MCF 10A (cell line): ENCODE measurements at regions of chr10 and their contacts with region 1.

Region 1: GRCh38 chr10:63236113-63236935 is 103.2 kb downstream of the NRBF2 start:
- DNase-seq: peak; percentile 85
- H3K4me3 Mint-ChIP-seq: peak overlapping the region; percentile 19
- H3K27ac Mint-ChIP-seq: peak overlapping the region; percentile 64
- H3K4me1 Mint-ChIP-seq: peaks cover 24% of the 10 kb centered on the region
- H3K27me3 Mint-ChIP-seq: no peaks in the 10 kb centered on the region
- CTCF ChIP-seq: no peak

Region 2: DNA sequence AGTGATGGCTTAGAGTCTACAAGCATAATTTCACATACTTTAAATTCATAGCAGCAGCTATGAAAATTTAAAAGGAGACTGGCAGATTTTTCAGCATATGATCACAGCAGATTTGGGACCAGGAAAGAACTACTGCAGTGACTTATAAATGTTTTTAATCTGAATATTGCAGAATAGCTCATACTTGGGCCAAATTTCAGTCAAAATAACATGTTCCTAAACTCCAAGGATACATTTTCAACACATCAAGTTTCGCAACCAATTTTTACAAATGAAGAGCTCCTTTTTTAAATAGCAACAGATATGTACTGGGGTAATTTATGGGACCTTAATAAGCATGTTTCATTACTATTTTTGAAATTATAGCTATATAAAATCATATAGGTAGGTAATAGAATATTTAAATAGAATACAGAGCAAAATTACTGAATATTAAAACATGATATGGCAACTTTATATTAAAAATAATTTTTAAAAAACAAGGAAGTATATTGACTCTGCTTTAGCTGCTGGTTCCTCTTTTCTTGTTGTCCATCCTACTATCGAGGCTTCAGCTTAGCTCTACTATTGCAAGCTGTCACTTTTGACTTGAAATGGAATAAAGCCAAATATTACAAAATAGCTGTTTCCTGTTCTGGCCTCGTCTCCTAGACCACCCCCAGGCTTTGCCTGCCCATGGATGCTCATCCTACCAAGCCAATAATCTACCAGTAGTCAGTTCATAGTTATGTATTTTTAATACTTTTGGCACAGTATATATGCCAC is 19.9 kb after region 1 on chr10:
- CTCF ChIA-PET with region 1: interaction called, 4 read pairs
- POLR2A ChIA-PET with region 1: interaction called, 30 read pairs
- intact Hi-C with region 1: no loop called
- DNase-seq: peak; percentile 35
- H3K4me3 Mint-ChIP-seq: no peak overlapping the region
- H3K27ac Mint-ChIP-seq: peak overlapping the region; percentile 6
- H3K4me1 Mint-ChIP-seq: peaks cover 39% of the 10 kb centered on the region
- H3K27me3 Mint-ChIP-seq: no peaks in the 10 kb centered on the region
- CTCF ChIP-seq: no peak

Region 3: DNA sequence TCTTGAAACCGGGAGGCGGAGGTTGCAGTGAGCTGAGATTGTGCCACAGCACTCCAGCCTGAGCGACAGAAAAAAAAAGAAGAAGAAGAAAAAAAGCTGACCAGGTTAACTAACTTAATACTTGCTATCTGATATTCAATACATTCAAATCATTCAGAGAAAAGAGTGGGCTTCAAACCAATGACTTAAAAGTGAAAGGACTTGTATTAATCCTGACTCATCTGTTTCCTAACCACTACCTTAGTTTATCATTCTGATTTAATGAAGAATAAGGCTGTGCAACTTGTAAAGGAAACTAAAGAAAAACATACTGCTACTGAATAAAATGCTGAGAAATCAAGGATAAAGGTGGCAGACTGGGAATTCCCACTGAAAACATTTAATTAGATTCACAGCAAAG is 25.2 kb after region 1 on chr10:
- CTCF ChIA-PET with region 1: interaction called, 4 read pairs
- POLR2A ChIA-PET with region 1: interaction called, 61 read pairs
- intact Hi-C with region 1: loop called (anchors 2 kb)
- DNase-seq: no peak
- H3K4me3 Mint-ChIP-seq: no peak overlapping the region
- H3K27ac Mint-ChIP-seq: peak overlapping the region; percentile 54
- H3K4me1 Mint-ChIP-seq: peaks cover 43% of the 10 kb centered on the region
- H3K27me3 Mint-ChIP-seq: no peaks in the 10 kb centered on the region
- CTCF ChIP-seq: no peak